HAP-1 (cell line): ENCODE measurements at regions of chrX and their contacts with region 1.

Region 1: DNA sequence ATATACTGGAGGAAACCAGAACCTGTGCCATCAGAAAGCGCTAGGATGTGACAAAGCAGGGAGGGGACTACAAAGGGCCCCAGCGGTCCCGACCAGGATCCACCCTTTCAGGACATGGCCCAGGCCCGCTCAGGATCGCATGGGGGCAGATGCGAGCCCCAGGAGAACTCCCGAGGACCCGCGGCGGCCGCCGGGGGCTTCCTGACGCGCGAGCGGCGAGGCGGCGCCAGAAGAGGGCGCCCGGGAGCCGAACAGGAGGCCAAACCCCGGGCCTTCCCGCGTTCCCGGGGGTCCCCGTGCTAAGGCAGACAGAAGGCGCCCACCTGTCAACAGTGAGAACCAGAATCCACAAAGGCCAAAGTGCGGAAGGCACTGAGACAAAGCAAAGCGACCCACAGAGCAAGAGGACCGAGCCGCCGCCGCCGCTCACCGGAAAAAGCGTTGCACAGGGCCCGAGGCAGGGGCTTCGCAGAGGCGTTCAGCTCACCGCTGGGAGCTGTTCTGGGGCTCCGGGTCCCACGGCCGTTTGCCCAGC is 7.3 kb upstream of the OPN1LW start:
- DNase-seq: peak; percentile 76 to 91
- H3K4me3 ChIP-seq: peak overlapping the region; percentile 14
- H3K4me1 ChIP-seq: peaks cover 3% of the 10 kb centered on the region; the same call in 1 of the 2 replicates
- H3K27me3 ChIP-seq: no peaks in the 10 kb centered on the region

Region 2: DNA sequence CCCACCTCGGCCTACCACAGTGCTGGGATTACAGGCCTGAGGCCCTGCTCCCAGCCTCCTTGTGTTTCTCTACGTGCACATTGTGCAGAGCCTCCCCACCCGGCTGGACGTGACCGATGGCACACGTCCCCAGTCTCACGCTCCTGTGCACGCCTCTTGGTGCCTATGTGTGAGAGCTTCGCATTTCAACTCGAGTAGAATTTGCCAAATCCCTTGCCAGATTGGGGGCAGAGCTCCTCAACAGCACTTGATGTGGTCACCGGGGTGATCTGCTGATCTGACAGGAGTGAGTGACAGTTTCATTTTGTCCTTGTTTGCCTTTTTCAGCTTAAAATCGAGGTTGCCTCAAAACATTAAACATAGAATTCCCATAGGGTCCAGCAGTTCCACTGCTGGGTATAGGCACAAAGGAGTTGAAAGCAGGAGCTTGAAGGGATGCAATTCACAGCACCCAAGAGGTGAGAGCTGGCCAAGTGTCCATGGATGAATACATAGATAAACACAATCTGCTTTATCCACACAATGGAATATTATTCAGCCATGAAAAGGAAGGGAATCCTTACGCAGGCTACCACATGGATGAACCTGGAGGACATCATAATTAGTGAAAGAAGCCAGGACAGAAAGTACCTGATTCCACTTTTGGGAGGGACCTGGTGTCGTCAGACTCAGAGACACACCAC is 146.6 kb before region 1 on chrX:
- in situ Hi-C with region 1: no loop called
- DNase-seq: no peak
- H3K4me3 ChIP-seq: no peak overlapping the region
- H3K4me1 ChIP-seq: no peaks in the 10 kb centered on the region
- H3K27me3 ChIP-seq: no peaks in the 10 kb centered on the region

Region 3: GRCh38 chrX:154074199-154074598 is 62.5 kb before region 1 on chrX:
- in situ Hi-C with region 1: no loop called
- DNase-seq: no peak
- H3K4me3 ChIP-seq: no peak overlapping the region
- H3K4me1 ChIP-seq: peaks cover 17% of the 10 kb centered on the region
- H3K27me3 ChIP-seq: no peaks in the 10 kb centered on the region

Region 4: DNA sequence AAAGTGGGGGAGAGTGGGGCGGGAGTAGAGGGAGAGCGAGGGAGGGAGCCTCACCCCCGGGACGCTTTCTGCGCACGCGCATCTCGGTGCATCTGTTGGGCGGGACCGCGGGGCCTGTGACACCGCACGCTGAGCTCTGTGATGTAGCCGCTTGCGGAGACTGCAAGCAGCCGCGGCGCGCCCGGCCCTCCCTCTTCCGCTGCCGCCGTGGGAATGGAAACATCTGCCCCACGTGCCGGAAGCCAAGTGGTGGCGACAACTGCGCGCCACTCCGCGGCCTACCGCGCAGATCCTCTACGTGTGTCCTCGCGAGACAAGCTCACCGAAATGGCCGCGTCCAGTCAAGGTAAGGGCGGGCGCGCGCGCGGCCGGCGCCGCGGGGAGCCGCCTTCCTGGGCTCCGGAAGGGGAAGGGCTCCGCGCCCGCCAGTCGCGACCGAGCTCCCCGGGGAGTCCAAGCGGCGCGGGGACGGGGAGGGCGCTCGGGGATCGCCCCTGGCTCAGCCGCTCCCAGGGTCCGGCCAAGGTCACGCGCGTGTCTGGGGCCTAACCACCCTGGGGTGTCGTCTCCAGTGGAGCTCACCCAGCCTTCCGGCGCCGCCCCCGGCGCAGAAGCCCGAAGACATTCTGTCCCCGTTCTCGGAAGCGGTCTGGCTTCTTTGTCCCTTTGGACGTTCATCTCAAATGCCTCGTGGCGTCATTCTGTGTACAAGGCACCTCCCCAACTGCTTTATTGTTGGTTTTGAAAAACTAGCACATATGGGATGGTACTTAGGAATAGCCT is 890.2 kb after region 1 on chrX and contains the start of gene FUNDC2:
- in situ Hi-C with region 1: loop called (anchors 25 kb)
- DNase-seq: peak; percentile 90 to 96
- H3K4me3 ChIP-seq: peak within 1 kb of the TSS; percentile 75
- H3K4me1 ChIP-seq: peaks cover 10% of the 10 kb centered on the region
- H3K27me3 ChIP-seq: no peaks in the 10 kb centered on the region